ENCODE measurements at regions of chr2 and their contacts with region 1.

Region 1: GRCh38 chr2:86623651-86624541 is at the start of gene RNF103:
- DNase-seq: peak; percentile 83 to 98
- H3K4me3 ChIP-seq: peak within 1 kb of the TSS; percentile 85 to 94
- H3K27ac ChIP-seq: peak within 1 kb of the TSS; percentile 94 to 100
- H3K4me1 ChIP-seq: peaks cover 3 to 14% of the 10 kb centered on the region in 2 donors
- H3K27me3 ChIP-seq: no peaks in the 10 kb centered on the region
- CTCF ChIP-seq: no peak
- total RNA-seq, gene RNF103: 20.5 TPM

Region 2: DNA sequence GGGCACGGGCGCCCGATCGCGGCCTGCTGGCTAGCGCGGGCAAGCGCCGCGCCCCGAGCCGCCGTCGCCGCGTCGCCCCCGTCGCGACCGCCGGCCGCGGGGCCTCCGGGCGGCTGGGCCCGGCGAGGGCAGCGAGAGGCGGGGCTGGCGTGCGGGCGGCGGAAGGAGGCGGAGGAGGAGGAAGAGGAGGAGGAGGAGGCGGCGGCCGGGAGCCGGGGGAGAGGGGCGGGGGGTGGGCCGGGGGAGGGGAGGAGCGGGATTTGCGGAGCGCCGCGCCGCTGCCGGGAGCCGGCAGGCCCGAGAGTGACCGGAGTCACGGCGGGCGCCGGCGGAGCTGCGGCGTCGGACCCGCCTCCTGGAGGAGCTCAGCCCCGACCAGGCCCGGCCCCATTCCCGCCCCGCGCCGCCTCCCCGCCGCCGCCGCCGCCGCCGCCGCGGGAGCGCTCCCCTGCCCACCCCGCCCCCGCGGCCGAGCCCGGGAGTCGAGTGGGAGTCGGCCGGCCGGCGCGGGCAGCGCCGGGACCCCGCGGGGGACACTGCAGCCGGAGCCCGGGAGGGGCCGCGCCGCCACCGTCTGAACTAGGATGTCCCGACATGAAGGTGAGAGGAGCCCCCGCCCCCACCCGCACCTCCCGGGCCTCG is 1652.9 kb before region 1 on chr2 and contains the start of gene KCMF1:
- intact Hi-C with region 1: loop called (anchors 5 kb)
- DNase-seq: peak in 1 of 2 donors; percentile 77
- H3K4me3 ChIP-seq: peak within 1 kb of the TSS; percentile 90 to 99
- H3K27ac ChIP-seq: peak within 1 kb of the TSS; percentile 94 to 99
- H3K4me1 ChIP-seq: peaks cover 9 to 22% of the 10 kb centered on the region in 2 donors
- H3K27me3 ChIP-seq: no peaks in the 10 kb centered on the region
- CTCF ChIP-seq: no peak
- total RNA-seq, gene KCMF1: 14.4 TPM

Region 3: DNA sequence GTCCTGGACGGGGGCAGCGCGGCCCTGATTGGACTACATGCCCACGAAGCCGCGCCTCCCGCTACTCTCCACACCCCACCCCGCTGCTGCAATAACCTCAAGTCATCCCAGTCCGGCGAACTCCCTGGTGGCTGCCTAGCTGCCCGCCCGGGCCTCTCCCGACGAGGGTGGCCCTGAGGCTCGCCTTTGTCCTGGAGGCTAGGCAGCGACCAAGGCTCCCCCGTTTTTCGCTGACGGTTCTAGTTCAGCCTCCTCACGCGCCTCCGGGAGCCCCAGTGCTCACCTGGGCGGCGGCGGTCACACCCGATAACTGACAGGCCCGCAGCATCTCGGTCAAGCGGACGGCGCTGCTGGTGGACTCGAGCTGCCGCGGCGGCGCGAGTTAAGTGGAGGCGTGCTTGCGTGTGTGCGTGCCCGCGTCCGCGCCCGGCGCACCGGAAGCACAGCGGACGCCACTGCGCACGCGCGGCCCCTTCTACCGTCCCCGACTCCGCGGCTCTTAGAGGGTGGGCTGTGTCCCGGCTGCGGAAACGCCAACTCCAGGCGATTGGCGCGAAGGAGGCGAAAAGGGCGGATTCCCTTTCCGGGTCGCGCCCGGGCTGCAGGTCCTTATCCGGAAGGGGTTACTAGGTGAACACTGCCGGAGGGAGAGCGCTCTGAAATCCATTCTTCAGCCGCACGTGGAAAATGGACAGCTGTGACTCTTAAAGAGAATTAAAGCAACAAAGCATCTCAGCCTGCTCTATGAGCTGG is 428.7 kb before region 1 on chr2 and contains the start of gene IMMT:
- intact Hi-C with region 1: no loop called
- DNase-seq: peak; percentile 67 to 95
- H3K4me3 ChIP-seq: peak within 1 kb of the TSS; percentile 89 to 91
- H3K27ac ChIP-seq: peak within 1 kb of the TSS; percentile 99
- H3K4me1 ChIP-seq: peaks cover 6 to 41% of the 10 kb centered on the region in 2 donors
- H3K27me3 ChIP-seq: no peaks in the 10 kb centered on the region
- CTCF ChIP-seq: no peak
- total RNA-seq, gene IMMT: 97.1 TPM

Region 4: DNA sequence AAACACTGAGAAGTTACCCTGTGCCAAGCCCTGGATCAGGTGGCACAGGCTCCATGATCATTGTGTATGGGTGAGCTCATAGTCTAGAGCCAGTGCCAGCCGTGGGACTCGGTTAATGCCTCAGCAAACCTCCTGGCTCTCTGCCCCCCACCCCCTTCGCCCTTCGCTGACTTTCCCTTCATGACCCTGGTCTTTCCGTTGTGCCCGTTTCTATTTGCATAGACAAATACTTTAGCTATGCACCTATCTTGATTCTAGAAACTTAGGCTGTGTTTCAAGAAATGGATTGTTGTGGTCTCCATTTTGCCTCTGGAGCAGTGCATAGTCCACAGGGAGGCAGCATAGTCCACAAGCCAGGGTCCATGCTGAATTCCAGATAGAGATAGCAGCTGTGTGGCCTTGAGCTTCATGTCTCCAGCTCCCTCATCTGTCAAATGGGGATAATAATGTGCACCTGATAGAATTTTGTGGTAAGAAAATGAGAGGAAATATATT is 227.6 kb before region 1 on chr2:
- intact Hi-C with region 1: loop called (anchors 10 kb)
- DNase-seq: peak in 1 of 2 donors; percentile 64
- H3K4me3 ChIP-seq: peak overlapping the region in 1 of 2 donors; percentile 45
- H3K27ac ChIP-seq: no peak overlapping the region
- H3K4me1 ChIP-seq: no peaks in the 10 kb centered on the region
- H3K27me3 ChIP-seq: no peaks in the 10 kb centered on the region
- CTCF ChIP-seq: peak; percentile 41 to 63 (median 55)

Region 5: GRCh38 chr2:86480105-86480504 is 143.8 kb before region 1 on chr2:
- intact Hi-C with region 1: loop called (anchors 5 kb)
- DNase-seq: no peak
- H3K4me3 ChIP-seq: peak overlapping the region in 1 of 2 donors; percentile 22
- H3K27ac ChIP-seq: peak overlapping the region; percentile 21 to 76
- H3K4me1 ChIP-seq: peaks cover 30 to 60% of the 10 kb centered on the region in 2 donors
- H3K27me3 ChIP-seq: no peaks in the 10 kb centered on the region
- CTCF ChIP-seq: no peak

Region 6: DNA sequence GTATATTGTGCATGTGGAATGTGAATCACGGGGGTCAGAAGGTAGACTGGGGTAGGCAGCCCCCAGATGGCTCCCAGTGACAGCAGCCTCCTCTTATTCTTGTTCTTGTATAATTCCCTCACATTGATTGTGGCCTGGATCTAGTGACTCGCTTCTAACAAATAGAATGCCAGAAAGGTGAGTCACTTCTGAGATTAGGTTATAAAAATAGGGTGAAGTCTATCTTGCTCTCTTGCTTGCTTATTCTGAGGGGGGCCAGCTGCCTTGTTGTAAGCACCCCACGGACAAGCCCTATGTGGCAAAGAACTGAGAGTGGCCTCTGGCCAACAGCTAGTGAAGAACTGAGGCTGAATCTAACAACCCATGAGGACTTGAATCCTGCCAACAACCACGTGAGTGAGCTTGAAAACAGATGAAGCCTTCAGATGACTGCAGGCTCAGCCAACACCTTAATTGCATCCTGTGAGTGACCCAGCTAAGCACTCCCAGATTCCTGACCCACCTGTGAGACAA is 80.6 kb after region 1 on chr2:
- intact Hi-C with region 1: loop called (anchors 5 kb)
- DNase-seq: peak in 1 of 2 donors; percentile 63
- H3K4me3 ChIP-seq: no peak overlapping the region
- H3K27ac ChIP-seq: peak overlapping the region; percentile 20 to 36
- H3K4me1 ChIP-seq: peaks cover 0 to 6% of the 10 kb centered on the region in 2 donors
- H3K27me3 ChIP-seq: no peaks in the 10 kb centered on the region
- CTCF ChIP-seq: no peak